Colonic mucosa (tissue), 4 donors: ENCODE measurements at regions of chr14 and their contacts with region 1.

Region 1: GRCh38 chr14:62126879-62127478 is 364.8 kb downstream of the SNAPC1 start:
- DNase-seq: peak; percentile 20
- H3K4me3 ChIP-seq: no peak overlapping the region
- H3K27ac ChIP-seq: no peak overlapping the region
- H3K4me1 ChIP-seq: no peaks in the 10 kb centered on the region
- H3K27me3 ChIP-seq: no peaks in the 10 kb centered on the region
- CTCF ChIP-seq: peak; percentile 65

Region 2: DNA sequence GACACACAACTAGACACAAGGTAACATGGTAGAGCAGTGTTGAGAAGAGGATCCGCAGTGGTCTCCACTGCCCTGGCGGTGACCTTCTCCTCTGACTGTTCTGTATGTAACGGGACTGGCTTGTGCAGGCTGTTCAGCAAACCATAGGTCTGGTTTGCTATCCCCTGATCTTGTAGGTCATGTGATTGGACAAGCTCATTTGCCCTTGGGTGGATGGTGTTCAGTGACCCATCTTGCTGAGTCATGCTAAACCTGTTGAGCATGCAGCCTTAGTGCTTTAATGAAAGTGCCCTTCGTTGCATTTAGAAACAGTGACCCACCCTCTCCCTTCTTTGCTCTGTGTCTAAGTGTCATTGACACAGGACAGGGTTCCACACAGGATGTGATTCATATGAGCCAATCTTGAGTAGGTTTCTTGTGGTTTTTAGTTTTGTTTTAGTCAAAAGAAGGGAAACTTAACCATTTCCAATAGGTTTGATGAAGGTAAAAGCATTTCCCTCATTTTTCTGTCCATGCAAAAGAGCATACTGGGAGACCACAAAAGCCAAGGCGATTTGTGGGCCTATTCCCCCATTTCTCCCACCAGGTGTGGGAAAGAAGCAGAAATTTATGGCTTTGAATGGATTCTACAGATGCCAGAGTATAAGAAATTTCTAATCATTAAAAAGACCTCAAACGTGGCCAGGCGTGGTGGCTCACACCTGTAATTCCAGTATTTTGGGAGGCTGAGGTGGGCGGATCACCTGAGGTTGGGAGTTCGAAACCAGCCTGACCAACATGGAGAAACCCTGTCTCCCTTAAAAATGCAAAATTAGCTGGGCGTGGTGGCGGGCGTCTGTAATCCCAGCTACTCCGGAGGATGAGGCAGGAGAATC is 464.3 kb before region 1 on chr14:
- intact Hi-C with region 1: no loop called
- DNase-seq: peak; percentile 41
- H3K4me3 ChIP-seq: no peak overlapping the region
- H3K27ac ChIP-seq: peak overlapping the region; percentile 3
- H3K4me1 ChIP-seq: no peaks in the 10 kb centered on the region
- H3K27me3 ChIP-seq: no peaks in the 10 kb centered on the region
- CTCF ChIP-seq: no peak

Region 3: DNA sequence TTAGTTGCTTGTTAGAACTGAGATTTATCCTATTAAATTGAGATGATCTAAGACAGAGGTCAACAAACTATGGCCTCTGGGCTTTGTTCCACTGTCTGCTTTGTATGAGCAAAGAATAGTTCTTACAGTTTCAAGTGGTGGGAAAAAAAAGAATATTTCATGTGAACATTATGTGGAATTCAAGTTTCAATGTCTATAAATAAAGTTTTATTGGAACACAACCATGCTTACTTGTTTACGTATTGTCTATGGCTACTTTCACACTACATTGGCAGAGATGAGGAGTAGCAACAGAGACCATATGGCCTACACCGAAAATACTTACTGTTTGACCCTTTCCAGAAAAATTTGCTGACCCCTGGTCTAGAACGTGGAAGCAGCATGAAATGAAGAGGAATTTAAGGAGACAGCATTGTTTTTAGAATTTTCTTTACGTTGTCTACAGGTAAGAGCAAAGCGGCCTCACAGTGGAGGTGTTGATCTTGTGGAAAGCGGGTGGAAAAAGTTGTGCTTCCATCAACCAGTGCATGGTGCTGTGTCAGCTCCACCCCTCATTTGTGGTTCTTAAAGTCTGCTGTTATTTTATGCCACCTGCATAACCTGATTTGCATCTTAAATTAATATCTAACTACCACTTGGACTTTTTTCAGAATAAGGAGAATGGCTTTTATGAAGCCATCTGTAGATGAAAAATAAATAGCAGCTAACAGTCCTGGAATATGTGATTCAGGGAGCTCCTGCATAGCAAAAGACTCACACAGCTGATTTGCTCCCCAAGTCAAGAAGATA is 229.9 kb before region 1 on chr14:
- intact Hi-C with region 1: loop called (anchors 2 kb)
- DNase-seq: no peak
- H3K4me3 ChIP-seq: no peak overlapping the region
- H3K27ac ChIP-seq: no peak overlapping the region
- H3K4me1 ChIP-seq: no peaks in the 10 kb centered on the region
- H3K27me3 ChIP-seq: no peaks in the 10 kb centered on the region
- CTCF ChIP-seq: no peak

Region 4: GRCh38 chr14:61925043-61925442 is 201.9 kb before region 1 on chr14:
- intact Hi-C with region 1: loop called (anchors 10 kb)
- DNase-seq: no peak
- H3K4me3 ChIP-seq: no peak overlapping the region
- H3K27ac ChIP-seq: no peak overlapping the region
- H3K4me1 ChIP-seq: no peaks in the 10 kb centered on the region
- H3K27me3 ChIP-seq: no peaks in the 10 kb centered on the region
- CTCF ChIP-seq: no peak

Region 5: DNA sequence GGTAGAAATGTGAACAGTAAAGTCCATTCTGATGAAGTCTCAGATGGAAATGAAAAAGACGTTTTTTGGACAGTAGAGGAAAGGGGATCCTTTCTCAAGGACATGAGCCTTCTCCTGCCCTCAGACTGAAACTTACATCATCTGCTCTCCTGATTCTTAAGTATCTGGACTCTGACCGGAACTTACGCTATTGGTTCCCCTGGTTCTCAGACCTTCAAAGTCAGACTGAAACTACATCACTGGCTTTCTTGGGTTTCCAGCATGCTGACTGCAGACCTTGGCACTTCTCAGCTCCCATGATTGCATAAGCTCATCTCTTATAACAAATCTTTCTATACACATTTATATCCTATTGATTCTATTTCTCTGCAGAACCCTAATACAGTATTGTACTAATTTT is 73.8 kb before region 1 on chr14:
- intact Hi-C with region 1: no loop called
- DNase-seq: no peak
- H3K4me3 ChIP-seq: no peak overlapping the region
- H3K27ac ChIP-seq: no peak overlapping the region
- H3K4me1 ChIP-seq: no peaks in the 10 kb centered on the region
- H3K27me3 ChIP-seq: no peaks in the 10 kb centered on the region
- CTCF ChIP-seq: no peak

Region 6: DNA sequence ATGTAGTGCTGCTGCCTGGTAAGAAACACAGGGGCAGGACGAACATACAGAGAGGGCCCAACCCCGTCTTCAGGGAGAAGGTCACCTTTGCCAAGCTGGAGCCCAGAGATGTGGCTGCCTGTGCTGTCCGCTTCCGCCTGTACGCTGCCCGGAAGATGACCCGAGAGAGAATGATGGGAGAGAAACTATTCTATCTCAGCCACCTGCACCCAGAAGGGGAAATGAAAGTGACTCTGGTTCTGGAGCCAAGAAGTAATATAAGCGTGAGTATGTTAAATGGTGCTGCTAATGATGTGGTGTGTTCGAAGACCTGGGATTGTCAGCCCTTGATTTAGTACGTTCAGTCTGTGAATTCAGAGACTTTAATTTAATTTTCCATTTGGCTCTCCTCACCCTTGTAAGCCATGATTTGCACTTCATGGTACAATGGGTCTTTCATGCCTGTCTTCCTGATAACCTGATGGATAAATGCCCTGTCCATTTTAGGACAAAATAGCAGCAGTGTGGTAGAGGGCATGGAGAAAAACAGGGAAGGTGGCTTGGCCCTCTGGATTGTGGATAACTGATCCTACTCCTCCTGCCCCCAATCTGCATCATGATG is 45.9 kb before region 1 on chr14:
- intact Hi-C with region 1: no loop called
- DNase-seq: no peak
- H3K4me3 ChIP-seq: no peak overlapping the region
- H3K27ac ChIP-seq: no peak overlapping the region
- H3K4me1 ChIP-seq: no peaks in the 10 kb centered on the region
- H3K27me3 ChIP-seq: no peaks in the 10 kb centered on the region
- CTCF ChIP-seq: no peak

Region 7: DNA sequence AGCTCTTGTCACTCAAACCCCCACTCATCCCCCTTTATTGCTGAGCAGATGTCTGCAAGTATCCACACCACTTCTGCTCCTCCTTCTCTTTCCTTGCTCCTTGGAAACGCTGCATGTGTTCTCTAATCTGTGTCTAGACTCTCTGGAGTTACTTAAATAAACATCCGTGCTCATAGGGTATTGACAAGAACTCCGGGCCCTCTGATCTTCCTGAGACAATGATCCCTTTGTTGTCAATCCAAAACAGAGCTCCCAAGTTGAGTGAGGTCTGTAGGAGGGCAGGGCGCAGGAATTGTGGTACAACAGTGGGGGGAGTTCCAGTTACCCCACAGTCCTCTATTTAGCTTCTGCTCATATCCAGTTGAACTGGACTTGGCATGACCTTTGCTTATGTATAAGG is 124.3 kb after region 1 on chr14:
- intact Hi-C with region 1: no loop called
- DNase-seq: no peak
- H3K4me3 ChIP-seq: no peak overlapping the region
- H3K27ac ChIP-seq: no peak overlapping the region
- H3K4me1 ChIP-seq: no peaks in the 10 kb centered on the region
- H3K27me3 ChIP-seq: no peaks in the 10 kb centered on the region
- CTCF ChIP-seq: no peak